Left cardiac atrium (tissue), 4 donors: ENCODE measurements at regions of chr11 and their contacts with region 1.

Region 1: GRCh38 chr11:124837491-124837856 is 27.8 kb upstream of the ROBO3 start:
- DNase-seq: no peak
- ATAC-seq: peak; percentile 60 to 71

Region 2: DNA sequence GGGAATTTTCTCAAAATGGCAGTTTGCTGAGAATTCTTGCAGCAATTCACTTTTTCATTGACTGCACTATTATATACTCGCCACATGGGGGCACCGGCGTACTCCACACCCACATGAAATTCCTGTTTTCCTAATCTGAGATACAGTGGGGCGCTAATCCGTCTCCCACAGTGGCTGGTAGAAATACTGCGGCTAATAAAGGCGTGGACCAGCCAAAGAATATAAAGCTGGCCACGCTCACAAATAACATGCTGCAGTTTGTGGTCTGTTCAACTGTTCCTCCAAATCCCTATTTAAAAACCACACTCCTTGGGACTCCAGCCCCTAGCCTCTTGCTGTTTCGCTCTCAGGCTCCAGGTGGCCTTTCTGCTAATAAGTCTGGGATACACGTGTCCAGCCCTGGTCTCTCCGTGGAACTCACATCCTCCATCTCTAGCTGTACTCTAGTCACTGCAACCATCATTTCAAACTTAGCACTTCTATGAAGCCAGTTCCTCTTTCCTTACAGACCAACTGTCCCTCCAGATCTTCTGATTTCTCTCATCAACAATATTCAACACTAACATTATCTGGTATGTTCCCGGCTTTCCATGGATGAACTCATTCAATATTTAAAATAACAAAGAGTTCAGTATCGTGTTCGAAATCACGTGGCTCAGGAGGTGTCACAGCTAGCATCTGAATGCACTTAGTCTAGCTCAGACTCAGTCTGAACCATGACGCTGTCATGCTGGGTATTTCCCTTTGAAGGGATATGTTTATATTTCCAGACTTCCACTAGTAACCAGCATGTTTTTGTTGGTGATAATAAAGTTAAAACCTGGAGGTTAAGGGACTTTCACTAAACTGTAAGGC is 192.8 kb before region 1 on chr11:
- intact Hi-C with region 1: loop called in 1 of 2 experiments (anchors 5 kb)
- DNase-seq: peak; percentile 60
- ATAC-seq: peak; percentile 79 to 89

Region 3: GRCh38 chr11:124656774-124657630 is 180.5 kb before region 1 on chr11:
- intact Hi-C with region 1: no loop called
- DNase-seq: no peak
- ATAC-seq: no peak

Region 4: DNA sequence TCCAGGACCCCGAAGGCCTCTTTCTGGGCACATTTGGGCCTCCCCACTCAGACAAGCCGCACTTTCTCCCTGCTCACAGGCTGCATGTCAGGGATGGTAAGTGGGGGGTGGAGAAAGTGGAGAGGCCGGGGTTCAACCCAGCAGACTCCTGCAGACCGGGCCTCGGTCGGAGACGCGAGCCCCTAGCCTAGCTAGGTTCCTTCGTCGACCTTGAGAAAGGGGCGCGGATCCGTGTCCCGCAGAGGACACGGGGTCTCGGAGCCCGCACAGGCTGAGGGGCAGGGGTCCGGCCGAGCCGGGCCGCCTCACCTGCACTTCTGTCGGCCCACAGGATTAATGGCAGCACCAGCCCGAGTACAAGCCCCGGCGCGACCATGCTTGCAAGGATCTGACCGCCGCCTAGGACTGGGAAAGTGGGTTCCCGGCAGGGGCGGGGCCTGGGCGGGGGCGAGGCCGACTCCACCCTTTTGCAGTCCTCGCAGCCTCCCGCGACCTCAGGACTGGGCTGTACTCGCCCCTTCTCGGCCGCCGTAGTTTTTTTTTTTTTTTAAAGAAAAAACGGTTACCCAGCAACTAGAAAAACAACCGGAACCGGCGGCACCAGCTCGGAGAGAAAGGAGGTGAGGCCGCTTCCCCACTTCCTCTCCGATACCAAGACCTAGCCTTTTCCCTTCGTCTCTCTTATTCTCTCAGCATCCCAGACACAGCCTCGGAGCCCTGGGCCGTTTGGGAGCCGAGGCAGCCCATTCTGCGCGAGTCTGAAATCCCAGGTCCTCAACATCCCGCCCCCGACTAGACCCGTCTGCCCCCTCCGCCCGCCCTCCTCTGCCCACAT is 163.9 kb before region 1 on chr11 and contains the starts of genes SIAE and SPA17:
- intact Hi-C with region 1: loop called (anchors 2 to 5 kb)
- DNase-seq: peak; percentile 95
- ATAC-seq: peak; percentile 99
- total RNA-seq, gene SIAE: 40.4 to 41.0 TPM
- total RNA-seq, gene SPA17: 3.5 to 4.0 TPM

Region 5: DNA sequence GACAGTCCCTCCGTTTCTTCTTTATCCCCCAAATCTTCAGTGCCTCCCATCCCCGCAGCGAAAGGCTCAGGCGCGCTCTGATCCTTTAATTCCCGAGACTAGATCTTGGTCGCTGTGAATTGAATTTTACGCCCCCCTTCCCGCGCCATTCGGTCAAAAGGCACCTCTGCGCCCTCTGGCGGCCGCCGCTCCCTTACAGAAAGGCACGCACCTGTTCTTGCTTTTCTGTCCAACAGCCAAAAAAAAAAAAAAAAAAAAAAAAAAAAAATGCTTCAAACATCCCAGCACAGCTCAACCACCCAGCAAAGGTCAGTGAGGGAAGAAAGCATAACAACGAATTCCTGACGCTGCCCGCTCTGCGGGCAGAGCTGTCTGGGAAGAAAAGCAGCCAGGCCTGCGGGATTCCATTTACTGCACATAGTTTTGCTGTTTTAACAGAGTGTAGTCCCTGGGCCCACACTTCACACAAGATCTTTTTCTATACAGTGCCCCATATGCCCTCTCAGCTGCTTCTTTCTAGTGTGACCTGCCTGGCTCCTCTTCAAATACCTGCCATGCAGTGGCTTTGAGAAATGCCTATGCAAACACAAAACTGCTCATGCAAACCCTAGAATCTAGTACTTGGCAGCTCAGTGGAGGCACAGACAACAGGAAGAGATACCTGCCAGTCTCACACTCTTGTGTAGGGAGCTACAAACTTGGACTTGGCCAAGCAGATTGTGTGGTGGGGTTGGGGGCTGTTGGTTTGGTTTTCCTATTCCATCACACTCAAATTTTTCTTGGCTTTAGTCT is 74.1 kb before region 1 on chr11:
- intact Hi-C with region 1: loop called in 1 of 2 experiments (anchors 5 kb)
- DNase-seq: peak; percentile 91
- ATAC-seq: peak; percentile 15 to 27

Region 6: GRCh38 chr11:124800226-124800929 is 37.1 kb before region 1 on chr11 and contains the start of gene MSANTD2:
- intact Hi-C with region 1: no loop called
- DNase-seq: peak; percentile 88
- ATAC-seq: peak; percentile 98
- total RNA-seq, gene MSANTD2: 4.3 to 5.5 TPM

Region 7: GRCh38 chr11:124953753-124954589 is 116.5 kb after region 1 on chr11 and contains the start of gene CCDC15:
- intact Hi-C with region 1: no loop called
- DNase-seq: peak; percentile 99
- ATAC-seq: peak; percentile 100
- total RNA-seq, gene CCDC15: 0.31 to 0.82 TPM